SK-N-SH (cell line): ENCODE measurements at regions of chr7 and their contacts with region 1.

Region 1: GRCh38 chr7:37181550-37181932 is 267.1 kb downstream of the ELMO1 start:
- DNase-seq: no peak
- H3K4me3 ChIP-seq: no peak overlapping the region
- H3K27ac ChIP-seq: no peak overlapping the region
- H3K4me1 ChIP-seq: peaks cover 0 to 2% of the 10 kb centered on the region in 2 experiments; a peak in 1 of 4 replicates
- H3K27me3 ChIP-seq: no peaks in the 10 kb centered on the region
- CTCF ChIP-seq: no peak
- EP300 ChIP-seq: no peak
- RAD21 ChIP-seq: no peak

Region 2: DNA sequence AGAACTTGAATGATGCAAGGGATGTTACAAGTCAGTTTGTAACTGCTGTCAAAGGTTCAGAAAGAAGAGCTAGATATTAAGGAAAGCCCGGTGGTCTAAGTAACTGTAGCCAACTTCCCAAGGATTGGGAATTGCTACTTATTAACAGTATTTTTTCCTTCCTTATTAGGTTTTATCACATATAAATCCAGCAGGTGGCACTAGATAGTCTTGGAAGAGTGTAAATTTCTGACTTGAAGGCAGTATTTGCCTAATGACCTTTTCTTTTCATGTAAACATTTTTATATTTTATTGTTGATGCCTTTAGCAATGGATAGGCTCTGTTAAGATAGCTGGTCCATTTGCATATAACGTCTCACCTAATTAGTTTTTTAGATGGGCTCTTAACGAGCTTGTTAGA is 740.7 kb before region 1 on chr7:
- CTCF ChIA-PET with region 1: interaction called, 52 read pairs
- POLR2A ChIA-PET with region 1: no interaction called
- DNase-seq: peak; percentile 53
- H3K4me3 ChIP-seq: no peak overlapping the region
- H3K27ac ChIP-seq: no peak overlapping the region
- H3K4me1 ChIP-seq: no peaks in the 10 kb centered on the region
- H3K27me3 ChIP-seq: no peaks in the 10 kb centered on the region
- CTCF ChIP-seq: peak; percentile 77
- EP300 ChIP-seq: no peak
- RAD21 ChIP-seq: peak; percentile 72

Region 3: DNA sequence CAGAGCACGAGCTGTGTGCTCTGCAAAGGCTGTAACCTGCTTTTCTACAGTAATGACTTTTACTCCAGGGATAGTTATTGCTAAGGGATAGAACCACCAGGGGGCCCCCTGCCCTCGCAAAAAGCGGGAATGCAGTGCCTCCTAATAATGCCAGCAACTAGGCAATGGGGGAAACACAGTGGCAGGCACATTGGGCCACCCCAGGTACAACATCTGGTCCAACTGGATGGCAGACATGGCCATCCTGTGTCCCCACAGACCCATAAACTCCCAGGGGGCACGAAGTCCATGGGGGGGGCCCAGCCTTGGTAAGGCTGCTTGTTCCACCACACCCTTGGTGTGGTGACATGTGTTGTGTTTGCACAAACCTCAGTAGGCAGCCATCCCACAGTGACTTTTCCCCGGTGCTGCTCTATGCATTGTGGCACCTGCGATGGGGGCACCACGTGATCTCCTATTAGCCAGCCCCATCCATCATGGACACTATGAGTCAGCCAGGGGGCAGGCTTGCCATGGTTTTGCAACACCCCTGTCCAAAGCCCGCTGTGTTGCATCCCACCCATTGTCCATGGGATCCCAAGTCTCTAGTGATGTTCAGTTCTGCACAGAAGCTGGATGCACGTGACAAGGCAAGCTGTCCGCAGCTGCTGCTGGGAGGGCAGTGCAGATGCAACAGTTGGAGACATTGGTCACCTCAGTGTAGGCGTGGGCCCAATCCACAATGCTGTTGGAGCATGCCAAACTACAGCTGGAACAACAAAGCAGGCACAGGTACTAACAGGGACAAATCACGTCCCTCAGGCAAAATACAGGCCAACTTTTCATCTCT is 707.9 kb before region 1 on chr7:
- CTCF ChIA-PET with region 1: interaction called, 19 read pairs
- POLR2A ChIA-PET with region 1: no interaction called
- DNase-seq: peak; percentile 57
- H3K4me3 ChIP-seq: no peak overlapping the region
- H3K27ac ChIP-seq: no peak overlapping the region
- H3K4me1 ChIP-seq: peaks cover 6 to 14% of the 10 kb centered on the region in 2 experiments
- H3K27me3 ChIP-seq: no peaks in the 10 kb centered on the region
- CTCF ChIP-seq: peak; percentile 60
- EP300 ChIP-seq: no peak
- RAD21 ChIP-seq: peak; percentile 86

Region 4: GRCh38 chr7:36670585-36671431 is 510.7 kb before region 1 on chr7:
- CTCF ChIA-PET with region 1: interaction called, 11 read pairs
- POLR2A ChIA-PET with region 1: no interaction called
- DNase-seq: peak; percentile 70
- H3K4me3 ChIP-seq: no peak overlapping the region; a peak in 1 of 4 replicates
- H3K27ac ChIP-seq: no peak overlapping the region
- H3K4me1 ChIP-seq: no peaks in the 10 kb centered on the region; a peak in 1 of 4 replicates
- H3K27me3 ChIP-seq: no peaks in the 10 kb centered on the region; the same call in 1 of the 2 replicates
- CTCF ChIP-seq: peak; percentile 99
- EP300 ChIP-seq: no peak
- RAD21 ChIP-seq: peak; percentile 86

Region 5: DNA sequence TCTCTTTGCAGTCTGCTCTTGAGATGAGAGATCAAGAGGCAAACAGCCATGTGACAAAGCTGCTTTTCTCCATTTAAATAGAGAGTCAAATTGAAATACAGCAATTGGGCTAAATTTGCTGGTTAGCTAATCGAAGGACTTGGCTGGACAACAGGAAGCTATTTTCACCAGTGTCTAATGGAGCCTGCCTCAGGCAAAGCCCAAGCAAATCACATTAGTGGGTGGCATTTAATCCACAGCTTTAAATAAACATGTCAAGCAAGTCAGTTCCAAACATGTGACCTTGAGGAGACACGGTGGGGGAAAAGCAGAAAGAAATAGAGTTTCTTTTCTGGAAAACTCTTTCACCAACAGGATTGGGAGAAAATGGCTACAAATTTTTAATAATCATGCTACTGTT is 276.7 kb before region 1 on chr7:
- CTCF ChIA-PET with region 1: interaction called, 18 read pairs
- POLR2A ChIA-PET with region 1: no interaction called
- DNase-seq: peak; percentile 59
- H3K4me3 ChIP-seq: no peak overlapping the region
- H3K27ac ChIP-seq: peak overlapping the region in 1 of 2 experiments; percentile 97; a peak in 2 of 4 replicates
- H3K4me1 ChIP-seq: peaks cover 0 to 38% of the 10 kb centered on the region in 2 experiments; a peak in 2 of 4 replicates
- H3K27me3 ChIP-seq: no peaks in the 10 kb centered on the region
- CTCF ChIP-seq: no peak
- EP300 ChIP-seq: peak; percentile 17 to 97; a peak in 2 of 4 replicates
- RAD21 ChIP-seq: peak; percentile 45

Region 6: GRCh38 chr7:36986429-36987362 is 194.8 kb before region 1 on chr7:
- CTCF ChIA-PET with region 1: interaction called, 460 read pairs
- POLR2A ChIA-PET with region 1: interaction called, 7 read pairs
- DNase-seq: peak; percentile 79
- H3K4me3 ChIP-seq: peak overlapping the region; percentile 6 to 56; a peak in 3 of 4 replicates
- H3K27ac ChIP-seq: peak overlapping the region in 1 of 2 experiments; percentile 93; a peak in 2 of 4 replicates
- H3K4me1 ChIP-seq: peaks cover 0 to 35% of the 10 kb centered on the region in 2 experiments; a peak in 2 of 4 replicates
- H3K27me3 ChIP-seq: peaks cover 32% of the 10 kb centered on the region; the same call in 1 of the 2 replicates
- CTCF ChIP-seq: peak; percentile 99
- EP300 ChIP-seq: peak in 1 of 2 experiments; percentile 49; a peak in 2 of 4 replicates
- RAD21 ChIP-seq: peak; percentile 91

Region 7: DNA sequence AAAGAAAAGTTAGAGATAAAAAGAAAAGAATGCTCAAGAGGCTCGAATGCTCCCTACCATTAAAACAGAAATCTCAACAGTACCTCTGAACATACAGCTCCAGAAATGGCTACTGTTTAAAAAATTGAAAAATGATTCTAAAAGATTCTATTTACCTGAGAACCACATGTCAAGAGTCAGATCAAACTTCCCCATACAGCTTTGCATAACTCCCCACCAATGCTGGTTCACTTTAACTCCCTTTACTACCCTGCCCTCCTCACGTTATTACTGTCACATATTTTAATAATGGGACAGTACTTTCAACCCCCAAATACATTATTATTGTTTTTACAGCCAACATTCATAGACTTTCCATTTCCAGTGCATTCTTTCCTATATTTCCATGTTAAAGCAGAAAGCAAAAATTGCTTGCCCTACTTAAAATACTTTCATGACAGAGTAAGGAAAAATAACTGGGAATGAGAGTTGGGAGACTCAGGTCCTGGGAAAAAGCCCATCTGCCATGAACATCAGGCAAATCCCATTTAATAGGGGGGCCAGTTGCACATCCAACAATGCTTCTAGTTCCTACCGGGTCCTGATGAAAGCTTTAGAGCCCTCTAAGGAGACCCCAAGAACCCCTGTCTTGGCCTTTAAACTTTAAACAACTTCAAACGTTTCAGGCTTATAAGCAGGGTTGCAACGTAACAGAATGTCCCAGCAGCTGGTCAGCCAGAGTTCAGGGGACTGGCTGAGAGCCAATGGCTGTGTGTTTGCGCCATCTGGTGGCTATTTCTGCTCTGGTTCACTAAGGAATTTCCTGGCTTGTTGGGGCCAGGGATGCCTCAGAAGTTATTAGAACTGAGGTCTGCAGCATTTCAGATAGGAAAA is 19.7 kb after region 1 on chr7:
- CTCF ChIA-PET with region 1: interaction called, 305 read pairs
- POLR2A ChIA-PET with region 1: interaction called, 4 read pairs
- DNase-seq: peak; percentile 83
- H3K4me3 ChIP-seq: no peak overlapping the region
- H3K27ac ChIP-seq: no peak overlapping the region
- H3K4me1 ChIP-seq: peaks cover 0 to 15% of the 10 kb centered on the region in 2 experiments; a peak in 2 of 4 replicates
- H3K27me3 ChIP-seq: no peaks in the 10 kb centered on the region
- CTCF ChIP-seq: peak; percentile 99
- EP300 ChIP-seq: peak in 1 of 2 experiments; percentile 26; a peak in 1 of 4 replicates
- RAD21 ChIP-seq: peak; percentile 91